Activated CD4-positive, alpha-beta T cell treated with anti-CD3 and anti-CD28 coated beads, Interleukin-2, amount 10 ng/mL, durations not matched to agents 24 days and 14 days (primary cell): ENCODE measurements at regions of chr13 and their contacts with region 1.

Region 1: GRCh38 chr13:99542788-99543406 is 41.6 kb downstream of the TM9SF2 start:
- DNase-seq: peak; percentile 83
- H3K4me3 Mint-ChIP-seq: peak overlapping the region; percentile 39
- H3K27ac Mint-ChIP-seq: peak overlapping the region; percentile 23
- H3K4me1 Mint-ChIP-seq: peaks cover 30% of the 10 kb centered on the region
- H3K27me3 Mint-ChIP-seq: no peaks in the 10 kb centered on the region

Region 2: DNA sequence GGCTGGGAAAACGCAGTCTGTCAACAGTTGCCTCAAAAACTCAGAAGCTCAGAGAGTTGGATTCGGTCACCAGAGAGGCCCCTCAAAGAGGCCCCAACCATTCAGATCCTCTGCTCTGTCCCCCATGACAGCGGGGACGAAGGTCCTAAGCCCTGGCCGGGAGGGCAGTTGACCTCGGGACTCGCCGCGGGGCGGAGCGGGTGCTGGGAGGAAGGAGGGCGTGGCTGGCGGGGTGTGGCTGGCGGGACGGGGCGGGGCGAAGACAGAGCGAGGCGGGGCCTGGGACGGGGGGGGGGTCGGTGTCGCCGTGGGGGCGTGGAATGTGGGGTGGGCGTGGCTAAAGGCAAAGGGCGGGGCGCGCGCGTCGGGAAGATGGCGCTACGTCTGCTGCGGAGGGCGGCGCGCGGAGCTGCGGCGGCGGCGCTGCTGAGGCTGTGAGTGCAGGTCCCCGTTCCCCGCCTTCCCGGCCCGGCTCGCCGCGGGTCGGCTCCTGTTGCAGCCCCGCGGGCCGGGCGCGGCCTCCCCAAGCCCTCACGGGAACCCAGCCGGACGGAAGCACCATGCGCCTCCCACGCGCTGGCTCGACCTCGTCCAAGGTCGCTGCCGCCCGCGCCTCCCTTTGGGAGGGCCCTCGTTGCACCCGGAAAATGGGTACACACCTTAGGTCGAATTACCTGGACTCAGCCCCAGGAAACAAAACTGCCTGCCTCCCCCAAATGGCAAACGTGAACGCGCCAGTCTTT is 63.6 kb after region 1 on chr13:
- intact Hi-C with region 1: loop called (anchors 5 kb)
- DNase-seq: peak; percentile 96
- H3K4me3 Mint-ChIP-seq: peak within 1 kb of the TSS; percentile 87
- H3K27ac Mint-ChIP-seq: peak within 1 kb of the TSS; percentile 86
- H3K4me1 Mint-ChIP-seq: peaks cover 18% of the 10 kb centered on the region
- H3K27me3 Mint-ChIP-seq: no peaks in the 10 kb centered on the region